ENCODE measurements at regions of chr12 and their contacts with region 1.

Region 1: GRCh38 chr12:14803011-14803829 is at the starts of genes C12orf60 and WBP11:
- DNase-seq: peak; percentile 97
- ATAC-seq: peak; percentile 99
- H3K4me3 ChIP-seq: peak within 1 kb of the TSS; percentile 96
- H3K27ac ChIP-seq: peak within 1 kb of the TSS; percentile 37
- H3K4me1 ChIP-seq: peaks cover 10% of the 10 kb centered on the region; the same call in 1 of the 2 replicates
- H3K27me3 ChIP-seq: no peaks in the 10 kb centered on the region
- CTCF ChIP-seq: no peak
- total RNA-seq, gene C12orf60: 0.29 and 0.47 TPM in 2 replicates
- total RNA-seq, gene WBP11: 20.0 and 21.4 TPM in 2 replicates

Region 2: GRCh38 chr12:14272956-14273907 is 530.0 kb before region 1 on chr12:
- CTCF ChIA-PET with region 1: no interaction called
- POLR2A ChIA-PET with region 1: no interaction called
- intact Hi-C with region 1: no loop called
- DNase-seq: peak; percentile 21
- ATAC-seq: no peak
- H3K4me3 ChIP-seq: no peak overlapping the region
- H3K27ac ChIP-seq: no peak overlapping the region
- H3K4me1 ChIP-seq: peaks cover 6% of the 10 kb centered on the region; the same call in 1 of the 2 replicates
- H3K27me3 ChIP-seq: no peaks in the 10 kb centered on the region
- CTCF ChIP-seq: no peak

Region 3: GRCh38 chr12:14650789-14651188 is 152.4 kb before region 1 on chr12:
- CTCF ChIA-PET with region 1: no interaction called
- POLR2A ChIA-PET with region 1: no interaction called
- intact Hi-C with region 1: no loop called
- DNase-seq: no peak
- ATAC-seq: no peak
- H3K4me3 ChIP-seq: no peak overlapping the region
- H3K27ac ChIP-seq: no peak overlapping the region
- H3K4me1 ChIP-seq: peaks cover 6% of the 10 kb centered on the region; the same call in 1 of the 2 replicates
- H3K27me3 ChIP-seq: peaks cover 5% of the 10 kb centered on the region; the same call in 1 of the 2 replicates
- CTCF ChIP-seq: no peak

Region 4: DNA sequence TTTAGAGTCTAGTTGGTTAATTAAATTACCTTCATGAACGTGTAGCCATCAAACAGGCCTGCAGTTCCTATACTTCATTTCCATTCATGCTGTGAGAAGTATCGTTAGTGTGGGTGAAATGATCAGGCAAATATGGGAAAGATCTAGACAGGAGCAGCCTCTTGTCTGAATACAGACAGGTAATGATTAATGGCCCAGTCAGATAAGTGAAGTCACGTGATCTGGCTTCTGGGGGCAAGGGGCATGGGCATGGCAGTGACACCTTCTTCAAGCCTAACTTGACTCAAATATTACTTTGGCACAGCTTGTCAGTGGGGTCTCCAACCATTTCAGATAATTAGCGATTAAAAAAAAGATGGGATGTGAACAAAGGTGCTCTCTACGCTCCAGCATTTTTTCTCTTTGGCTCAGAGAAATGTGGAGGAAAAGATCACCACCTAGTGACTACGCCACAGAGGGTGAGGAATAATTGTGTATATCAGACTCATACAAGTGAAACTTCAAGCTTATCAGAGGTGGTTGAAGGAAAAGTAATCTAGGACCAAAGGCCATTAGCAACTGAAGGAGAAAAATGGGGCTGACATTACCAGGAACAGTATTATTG is 124.6 kb before region 1 on chr12:
- CTCF ChIA-PET with region 1: no interaction called
- POLR2A ChIA-PET with region 1: no interaction called
- intact Hi-C with region 1: no loop called
- DNase-seq: no peak
- ATAC-seq: no peak
- H3K4me3 ChIP-seq: no peak overlapping the region
- H3K27ac ChIP-seq: no peak overlapping the region
- H3K4me1 ChIP-seq: no peaks in the 10 kb centered on the region
- H3K27me3 ChIP-seq: peaks cover 34% of the 10 kb centered on the region
- CTCF ChIP-seq: no peak

Region 5: DNA sequence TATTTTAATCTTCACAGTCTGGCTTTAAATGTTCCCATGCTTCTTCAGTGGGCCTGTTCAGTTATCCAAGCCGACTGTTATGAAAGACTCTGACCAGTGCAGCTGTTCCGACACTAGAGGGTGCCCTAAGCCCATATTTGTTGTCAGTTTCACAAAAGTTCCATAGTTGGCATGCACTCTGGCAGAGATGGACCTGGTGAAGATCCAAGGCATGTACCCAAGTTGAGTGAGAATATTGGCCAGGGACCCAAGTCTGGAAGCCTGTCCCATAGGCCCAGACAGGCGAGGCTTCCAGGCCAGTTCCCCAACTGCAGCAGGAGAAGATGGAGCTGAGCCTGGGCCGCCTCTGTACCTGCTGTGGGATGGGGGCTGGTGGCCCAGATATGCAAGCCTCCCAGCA is 79.5 kb before region 1 on chr12:
- CTCF ChIA-PET with region 1: no interaction called
- POLR2A ChIA-PET with region 1: no interaction called
- intact Hi-C with region 1: loop called (anchors 10 kb)
- DNase-seq: peak; percentile 62
- ATAC-seq: peak; percentile 65
- H3K4me3 ChIP-seq: no peak overlapping the region
- H3K27ac ChIP-seq: no peak overlapping the region
- H3K4me1 ChIP-seq: no peaks in the 10 kb centered on the region
- H3K27me3 ChIP-seq: no peaks in the 10 kb centered on the region
- CTCF ChIP-seq: peak; percentile 68

Region 6: GRCh38 chr12:14769969-14770495 is 33.2 kb before region 1 on chr12:
- CTCF ChIA-PET with region 1: interaction called, 4 read pairs
- POLR2A ChIA-PET with region 1: interaction called, 9 read pairs
- intact Hi-C with region 1: loop called (anchors 1 kb)
- DNase-seq: peak; percentile 70
- ATAC-seq: peak; percentile 33
- H3K4me3 ChIP-seq: peak overlapping the region; percentile 97
- H3K27ac ChIP-seq: peak overlapping the region; percentile 74
- H3K4me1 ChIP-seq: peaks cover 22% of the 10 kb centered on the region
- H3K27me3 ChIP-seq: no peaks in the 10 kb centered on the region
- CTCF ChIP-seq: peak; percentile 67

Region 7: DNA sequence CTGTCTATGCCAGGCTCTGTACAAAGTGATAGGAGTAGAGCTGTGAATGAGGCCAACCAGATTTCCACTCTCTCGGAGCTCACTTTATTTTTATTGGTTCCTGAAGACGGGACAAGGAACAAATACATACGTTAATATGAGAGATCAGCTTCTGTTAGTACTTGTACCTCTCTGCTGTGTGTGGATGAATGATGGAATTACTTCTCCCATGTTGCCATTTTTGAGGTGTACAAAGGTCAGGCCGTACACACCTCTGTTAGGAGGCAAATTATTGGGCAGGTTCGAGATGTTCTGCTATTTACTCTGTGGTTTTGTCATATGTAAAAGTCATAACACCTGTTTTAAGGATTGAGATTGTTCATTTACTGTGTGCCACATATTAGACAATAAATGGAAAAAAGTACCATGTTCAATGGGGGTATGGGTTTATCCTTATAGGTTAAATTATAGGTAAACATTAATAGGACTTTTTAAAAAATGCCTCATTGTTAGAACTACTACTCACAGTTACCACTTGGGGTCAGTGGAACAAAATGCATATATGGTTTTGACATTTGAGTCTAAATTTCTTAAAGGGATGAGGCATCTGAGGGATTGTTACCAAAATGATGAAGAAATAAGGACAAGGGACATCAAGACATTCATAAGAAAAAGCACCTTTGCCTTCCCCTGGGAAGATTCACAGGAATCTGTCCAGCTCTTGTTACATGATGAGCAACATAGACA is 26.8 kb before region 1 on chr12:
- CTCF ChIA-PET with region 1: interaction called, 4 read pairs
- POLR2A ChIA-PET with region 1: interaction called, 9 read pairs
- intact Hi-C with region 1: loop called (anchors 1 kb)
- DNase-seq: peak; percentile 38
- ATAC-seq: no peak
- H3K4me3 ChIP-seq: peak overlapping the region; percentile 92
- H3K27ac ChIP-seq: peak overlapping the region; percentile 64
- H3K4me1 ChIP-seq: peaks cover 37% of the 10 kb centered on the region
- H3K27me3 ChIP-seq: no peaks in the 10 kb centered on the region
- CTCF ChIP-seq: peak; percentile 53

Measured in PC-3 (cell line).